ENCODE measurements at regions of chr3 and their contacts with region 1.

Region 1: DNA sequence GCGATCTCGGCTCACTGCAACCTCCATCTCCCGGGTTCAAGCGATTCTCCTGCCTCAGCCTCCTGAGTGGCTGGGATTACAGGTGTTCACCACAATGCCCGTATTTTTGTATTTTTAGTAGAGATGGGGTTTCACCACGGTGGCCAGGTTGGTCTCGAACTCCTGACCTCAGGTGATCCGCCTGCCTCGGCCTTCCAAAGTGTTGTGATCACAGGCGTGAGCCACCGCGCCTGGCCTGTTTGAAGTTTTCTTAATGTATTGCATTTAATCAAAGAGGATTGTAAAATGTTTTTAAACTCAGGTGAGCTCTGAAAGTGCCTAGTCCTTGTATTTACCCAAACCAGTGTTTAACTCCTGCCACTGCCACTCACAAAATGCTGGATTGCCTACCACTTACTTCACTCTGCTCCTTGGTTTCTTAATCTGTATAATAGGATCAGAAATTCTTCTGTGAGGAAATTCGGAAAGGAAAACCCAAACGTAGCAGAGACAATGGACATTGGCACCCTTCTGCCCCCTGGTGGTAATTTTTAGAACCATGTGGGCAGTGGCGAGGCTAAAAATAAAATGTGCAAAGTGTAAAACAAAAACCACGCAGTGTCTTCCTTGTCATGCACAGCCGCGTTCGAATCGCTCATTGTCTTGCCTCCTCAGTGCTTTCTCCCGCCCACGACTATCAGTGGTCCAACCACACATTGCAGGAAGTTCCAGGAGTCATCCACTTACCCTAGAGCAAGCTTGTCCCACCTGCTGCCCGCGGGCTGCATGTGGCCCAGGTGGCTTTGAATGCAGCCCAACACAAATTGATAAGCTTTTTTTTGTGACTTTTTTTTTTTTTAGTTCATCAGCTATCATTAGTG is 27.3 kb downstream of the CEP19 start:
- DNase-seq: peak in 1 of 2 experiments; percentile 77
- H3K4me3 ChIP-seq: no peak overlapping the region
- H3K27ac ChIP-seq: no peak overlapping the region; the same call in 1 of the 2 replicates
- H3K4me1 ChIP-seq: peaks cover 2 to 6% (median 2%) of the 10 kb centered on the region in 4 experiments; a peak in 6 of 7 replicates
- H3K27me3 ChIP-seq: no peaks in the 10 kb centered on the region
- CTCF ChIP-seq: peak; percentile 32 to 81 (median 62)
- EP300 ChIP-seq: no peak
- POLR2A ChIP-seq: no peak
- RAD21 ChIP-seq: peak; percentile 79 to 82

Region 2: GRCh38 chr3:196528639-196529233 is 156.0 kb before region 1 on chr3:
- CTCF ChIA-PET with region 1: interaction called, 26 read pairs
- POLR2A ChIA-PET with region 1: no interaction called
- DNase-seq: peak; percentile 17 to 98
- H3K4me3 ChIP-seq: peak overlapping the region; percentile 50 to 65 (median 54)
- H3K27ac ChIP-seq: no peak overlapping the region
- H3K4me1 ChIP-seq: peaks cover 0 to 6% (median 3%) of the 10 kb centered on the region in 4 experiments; a peak in 3 of 7 replicates
- H3K27me3 ChIP-seq: no peaks in the 10 kb centered on the region
- CTCF ChIP-seq: peak; percentile 74 to 83 (median 78)
- EP300 ChIP-seq: peak in 1 of 2 experiments; percentile 37; a peak in 1 of 3 replicates
- POLR2A ChIP-seq: peak; percentile 12 to 52
- RAD21 ChIP-seq: peak; percentile 59 to 77

Region 3: DNA sequence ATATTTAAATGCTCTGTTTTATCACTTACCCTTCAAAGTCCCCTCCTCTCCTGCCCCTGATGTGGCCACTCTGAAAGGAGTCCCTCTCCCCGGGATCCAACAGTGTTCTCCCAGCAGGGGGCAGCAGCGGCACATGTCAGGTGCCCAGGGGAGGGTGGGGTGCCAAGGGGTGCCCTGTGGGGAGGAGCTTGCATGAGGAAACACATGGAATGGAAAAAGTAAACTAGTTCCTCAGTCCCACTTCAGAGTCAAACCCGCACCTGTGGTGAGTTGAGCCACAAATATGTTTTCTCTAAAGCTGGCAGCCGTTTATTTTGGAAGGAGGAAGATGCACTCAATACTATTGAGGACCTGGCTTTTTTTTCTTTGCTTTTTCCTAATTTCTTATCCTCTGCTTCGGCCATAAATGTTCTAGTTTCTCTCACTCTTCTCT is 75.4 kb before region 1 on chr3:
- CTCF ChIA-PET with region 1: interaction called, 143 read pairs
- POLR2A ChIA-PET with region 1: interaction called, 7 read pairs
- DNase-seq: peak; percentile 73 to 97
- H3K4me3 ChIP-seq: no peak overlapping the region
- H3K27ac ChIP-seq: no peak overlapping the region
- H3K4me1 ChIP-seq: peaks cover 0 to 3% (median 0%) of the 10 kb centered on the region in 4 experiments; a peak in 2 of 7 replicates
- H3K27me3 ChIP-seq: no peaks in the 10 kb centered on the region
- CTCF ChIP-seq: peak; percentile 73 to 95 (median 84)
- EP300 ChIP-seq: no peak
- POLR2A ChIP-seq: no peak
- RAD21 ChIP-seq: peak; percentile 96 to 99

Region 4: DNA sequence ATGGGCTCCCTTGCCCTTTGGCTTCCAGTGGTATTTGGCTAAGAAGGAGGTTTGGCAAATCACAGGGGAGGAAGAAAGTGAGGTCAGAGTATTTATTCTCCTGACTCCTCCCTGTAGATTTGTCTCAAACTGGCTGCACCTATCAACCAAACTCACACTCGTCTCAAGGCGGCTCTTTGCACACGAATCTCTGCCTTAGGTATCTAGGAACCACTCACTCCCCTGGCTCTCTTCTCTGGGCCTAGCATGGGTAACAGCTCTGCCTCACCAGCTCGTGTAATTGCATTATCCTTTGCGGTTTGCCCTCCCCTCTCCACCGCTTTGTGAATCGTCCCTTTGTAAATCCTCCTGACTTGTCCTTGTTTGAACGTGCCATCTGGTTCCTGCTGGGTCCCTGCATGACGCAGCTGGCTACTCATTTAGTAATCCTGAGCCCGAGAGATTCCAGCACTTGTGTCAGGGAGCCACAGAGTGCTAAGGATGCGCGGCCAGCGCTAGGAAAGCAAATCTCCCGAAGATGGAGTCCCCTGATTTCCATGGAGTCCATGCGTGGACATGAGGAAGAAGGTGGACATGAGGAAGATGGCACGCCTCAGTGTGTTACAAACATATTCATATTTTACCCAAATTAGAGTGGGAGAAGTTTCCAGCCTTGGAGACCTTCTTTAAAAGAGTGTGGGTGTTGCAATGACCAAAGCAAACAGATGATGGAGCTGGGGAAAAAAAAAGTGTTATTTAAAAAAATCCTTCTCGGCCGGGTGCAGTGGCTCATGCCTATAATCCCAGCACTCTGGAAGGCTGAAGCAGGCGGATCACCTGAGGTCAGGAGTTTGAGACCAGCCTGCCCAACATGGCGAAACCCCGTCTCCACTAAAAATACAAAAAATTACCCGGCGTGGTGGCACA is 18.6 kb before region 1 on chr3:
- CTCF ChIA-PET with region 1: interaction called, 25 read pairs
- POLR2A ChIA-PET with region 1: no interaction called
- DNase-seq: peak; percentile 69 to 74
- H3K4me3 ChIP-seq: peak overlapping the region in 1 of 4 experiments; percentile 20; a peak in 1 of 8 replicates
- H3K27ac ChIP-seq: peak overlapping the region; percentile 55; the same call in 1 of the 2 replicates
- H3K4me1 ChIP-seq: peaks cover 0 to 8% (median 2%) of the 10 kb centered on the region in 4 experiments; a peak in 5 of 7 replicates
- H3K27me3 ChIP-seq: no peaks in the 10 kb centered on the region
- CTCF ChIP-seq: no peak
- EP300 ChIP-seq: no peak; a peak in 1 of 3 replicates
- POLR2A ChIP-seq: 0 out of 3 replicates have a peak, but pooled peaks of 1 of the 2 experiments have one; percentile 54
- RAD21 ChIP-seq: no peak

Region 5: DNA sequence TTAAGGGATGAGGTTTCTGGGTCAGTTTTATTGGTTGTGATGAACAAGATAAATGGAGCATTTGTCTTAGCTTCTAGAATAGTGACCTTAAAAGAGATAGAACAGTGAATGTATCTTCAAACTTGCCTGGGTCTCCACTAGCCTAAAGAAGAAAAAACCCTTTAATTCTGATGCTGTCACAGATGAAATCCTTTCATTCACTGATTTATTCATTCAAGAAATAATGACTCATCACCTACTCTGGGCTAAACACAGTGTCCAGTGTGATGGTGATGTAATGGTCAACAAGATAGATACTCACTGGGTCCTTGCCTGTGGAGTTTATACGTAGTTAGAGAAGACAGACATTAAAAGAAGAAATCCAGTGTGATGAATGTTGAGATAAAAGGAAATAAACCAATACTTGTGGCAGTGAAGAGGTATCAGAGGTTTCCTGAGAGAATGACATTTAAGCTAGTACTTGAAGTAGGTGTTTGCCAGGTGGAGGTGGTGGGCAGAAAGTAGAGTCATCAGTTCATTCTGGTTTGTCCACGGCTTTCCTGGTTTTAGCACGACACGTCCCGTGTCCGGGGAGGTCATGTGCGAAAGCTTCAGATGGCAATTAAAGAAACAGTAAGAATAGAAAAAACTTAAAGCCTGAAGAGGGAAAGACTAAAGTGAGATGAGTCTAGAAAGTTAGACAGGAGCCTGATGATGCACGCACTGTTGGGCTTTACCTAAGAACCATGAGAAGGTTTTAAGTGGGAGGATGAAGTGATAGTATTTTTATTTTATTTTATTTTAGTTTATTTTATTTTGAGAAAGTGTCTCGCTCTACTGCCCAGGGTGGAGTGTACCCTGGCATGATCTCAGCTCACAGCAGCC is 73.3 kb after region 1 on chr3:
- CTCF ChIA-PET with region 1: no interaction called
- POLR2A ChIA-PET with region 1: no interaction called
- DNase-seq: no peak
- H3K4me3 ChIP-seq: no peak overlapping the region
- H3K27ac ChIP-seq: no peak overlapping the region; the same call in 1 of the 2 replicates
- H3K4me1 ChIP-seq: peaks cover 0 to 13% (median 3%) of the 10 kb centered on the region in 4 experiments; a peak in 5 of 7 replicates
- H3K27me3 ChIP-seq: no peaks in the 10 kb centered on the region; a peak in 1 of 7 replicates
- CTCF ChIP-seq: no peak
- EP300 ChIP-seq: no peak
- POLR2A ChIP-seq: no peak
- RAD21 ChIP-seq: no peak

Region 6: DNA sequence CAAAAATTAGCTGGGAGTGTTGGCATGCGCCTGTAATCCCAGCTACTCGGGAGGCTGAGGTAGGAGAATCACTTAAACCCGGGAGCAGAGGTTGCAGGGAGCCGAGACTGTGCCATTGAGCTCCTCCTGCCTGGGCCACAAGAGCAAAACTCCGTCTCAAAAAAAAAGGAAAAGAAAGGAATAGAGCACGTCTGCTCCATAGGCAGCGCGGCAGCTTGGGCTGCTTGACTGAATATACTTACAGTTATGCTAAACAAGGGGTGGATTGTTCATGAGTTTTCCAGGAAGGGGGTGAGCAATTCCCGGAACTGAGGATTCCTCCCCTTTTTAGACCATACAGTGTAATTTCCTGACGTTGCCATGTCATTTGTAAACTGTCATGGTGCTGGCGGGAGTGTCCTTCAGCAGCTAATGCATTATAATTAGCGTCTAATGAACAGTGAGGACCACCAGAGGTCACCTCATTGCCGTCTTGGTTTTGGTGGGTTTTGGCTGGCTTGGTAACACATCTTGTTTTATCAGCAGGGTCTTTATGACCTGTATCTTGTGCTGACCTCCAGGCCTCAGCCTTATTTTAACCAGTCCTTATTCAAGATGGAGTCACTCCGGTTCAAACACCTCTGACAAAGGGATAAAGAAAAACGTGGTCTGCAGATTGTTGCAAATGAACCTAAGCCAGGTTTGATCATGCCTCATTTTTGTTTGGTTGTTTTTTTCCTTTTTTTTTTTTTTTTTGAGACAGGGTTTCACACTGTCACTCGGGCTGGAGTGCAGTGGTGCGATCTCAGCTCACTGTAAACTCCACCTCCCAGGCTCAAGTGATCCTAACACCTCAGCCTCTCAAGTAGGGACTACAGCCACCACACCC is 158.0 kb after region 1 on chr3:
- CTCF ChIA-PET with region 1: no interaction called
- POLR2A ChIA-PET with region 1: no interaction called
- DNase-seq: no peak
- H3K4me3 ChIP-seq: no peak overlapping the region
- H3K27ac ChIP-seq: no peak overlapping the region
- H3K4me1 ChIP-seq: no peaks in the 10 kb centered on the region
- H3K27me3 ChIP-seq: no peaks in the 10 kb centered on the region
- CTCF ChIP-seq: no peak
- EP300 ChIP-seq: no peak
- POLR2A ChIP-seq: no peak
- RAD21 ChIP-seq: no peak

Measured in H1 (cell line).